Activated T-helper 1 cell treated with anti-CD3 and anti-CD28 coated beads, Interleukin-12 subunit alpha, Interleukin-12 subunit beta, Interleukin-2, Interleukin-4 antibody, amounts not matched to agents 30 ng/mL and 10 ng/mL and 1 ng/mL, durations not matched to agents 14 hours and 24 hours and 36 hours (primary cell): ENCODE measurements at regions of chr10 and their contacts with region 1.

Region 1: DNA sequence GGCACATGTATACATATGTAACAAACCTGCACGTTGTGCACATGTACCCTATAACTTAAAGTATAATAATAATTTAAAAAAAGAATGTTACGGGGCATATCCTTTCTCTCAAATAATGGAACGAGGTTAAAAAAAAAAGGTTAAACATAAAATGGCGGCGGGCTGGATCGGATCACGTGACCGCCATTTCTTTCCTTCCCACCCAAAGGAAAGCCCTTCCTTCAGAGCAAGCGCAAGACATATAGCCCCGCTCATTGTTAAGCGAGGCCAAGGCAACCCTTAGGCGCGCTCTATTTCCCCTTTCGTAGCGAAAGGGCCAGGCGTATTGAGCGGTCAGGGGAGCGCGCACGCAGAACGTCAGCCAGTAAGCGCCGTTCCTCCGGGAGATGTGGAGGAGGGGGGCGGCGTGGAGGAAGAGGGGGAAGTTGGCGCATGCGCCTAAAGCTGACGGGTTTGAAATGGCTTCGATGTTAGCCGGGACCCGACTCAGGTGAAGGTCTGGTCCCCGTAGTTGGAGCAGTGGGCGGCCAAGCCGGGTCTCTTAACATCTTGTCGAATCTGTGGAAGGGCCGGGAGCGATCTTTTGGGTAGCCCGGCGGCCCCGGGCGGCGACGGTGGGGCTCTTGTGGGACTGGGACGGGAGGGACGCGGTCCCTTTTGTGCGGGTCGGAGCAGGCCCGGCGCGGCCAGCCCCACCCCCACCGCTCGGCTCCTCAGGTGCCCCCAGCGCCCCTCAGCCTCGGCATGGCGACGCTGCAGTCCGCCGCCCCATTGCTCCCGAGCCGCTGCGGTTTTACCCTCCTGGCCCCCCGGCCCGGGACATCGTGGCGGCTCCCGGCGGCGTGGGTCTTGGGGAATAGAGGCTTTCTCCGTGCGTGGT is at the start of gene CCAR1:
- DNase-seq: peak; percentile 95
- H3K4me3 Mint-ChIP-seq: peak within 1 kb of the TSS; percentile 90
- H3K27ac Mint-ChIP-seq: peak within 1 kb of the TSS; percentile 98
- H3K4me1 Mint-ChIP-seq: peaks cover 14% of the 10 kb centered on the region
- H3K27me3 Mint-ChIP-seq: peaks cover 2% of the 10 kb centered on the region
- total RNA-seq, gene CCAR1: 102 and 106 TPM in 2 replicates

Region 2: GRCh38 chr10:68471586-68472408 is 249.2 kb before region 1 on chr10 and contains the start of gene DNA2:
- intact Hi-C with region 1: loop called (anchors 1 kb)
- DNase-seq: peak; percentile 71
- H3K4me3 Mint-ChIP-seq: peak within 1 kb of the TSS; percentile 96
- H3K27ac Mint-ChIP-seq: peak within 1 kb of the TSS; percentile 95
- H3K4me1 Mint-ChIP-seq: peaks cover 25% of the 10 kb centered on the region
- H3K27me3 Mint-ChIP-seq: no peaks in the 10 kb centered on the region
- total RNA-seq, gene DNA2: 50.2 and 54.3 TPM in 2 replicates

Region 3: DNA sequence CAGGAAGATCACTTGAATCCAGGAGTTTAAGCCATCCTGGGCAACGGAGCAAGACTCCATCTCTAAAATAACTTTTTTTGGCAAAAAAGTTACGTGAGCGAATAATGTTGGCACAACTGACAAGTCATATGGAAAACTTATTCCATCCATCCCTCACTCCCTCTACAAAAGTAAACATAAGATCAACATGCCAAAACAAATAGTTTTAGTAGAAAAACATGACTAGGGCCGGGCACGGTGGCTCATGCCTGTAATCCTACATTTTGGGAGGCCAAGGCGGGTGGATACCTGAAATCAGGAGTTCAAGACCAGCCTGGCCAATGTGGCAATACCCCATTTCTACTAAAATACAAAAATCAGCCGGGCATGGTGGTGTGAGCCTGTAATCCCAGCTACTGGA is 219.3 kb before region 1 on chr10:
- intact Hi-C with region 1: no loop called
- DNase-seq: no peak
- H3K4me3 Mint-ChIP-seq: no peak overlapping the region
- H3K27ac Mint-ChIP-seq: no peak overlapping the region
- H3K4me1 Mint-ChIP-seq: no peaks in the 10 kb centered on the region
- H3K27me3 Mint-ChIP-seq: no peaks in the 10 kb centered on the region

Region 4: DNA sequence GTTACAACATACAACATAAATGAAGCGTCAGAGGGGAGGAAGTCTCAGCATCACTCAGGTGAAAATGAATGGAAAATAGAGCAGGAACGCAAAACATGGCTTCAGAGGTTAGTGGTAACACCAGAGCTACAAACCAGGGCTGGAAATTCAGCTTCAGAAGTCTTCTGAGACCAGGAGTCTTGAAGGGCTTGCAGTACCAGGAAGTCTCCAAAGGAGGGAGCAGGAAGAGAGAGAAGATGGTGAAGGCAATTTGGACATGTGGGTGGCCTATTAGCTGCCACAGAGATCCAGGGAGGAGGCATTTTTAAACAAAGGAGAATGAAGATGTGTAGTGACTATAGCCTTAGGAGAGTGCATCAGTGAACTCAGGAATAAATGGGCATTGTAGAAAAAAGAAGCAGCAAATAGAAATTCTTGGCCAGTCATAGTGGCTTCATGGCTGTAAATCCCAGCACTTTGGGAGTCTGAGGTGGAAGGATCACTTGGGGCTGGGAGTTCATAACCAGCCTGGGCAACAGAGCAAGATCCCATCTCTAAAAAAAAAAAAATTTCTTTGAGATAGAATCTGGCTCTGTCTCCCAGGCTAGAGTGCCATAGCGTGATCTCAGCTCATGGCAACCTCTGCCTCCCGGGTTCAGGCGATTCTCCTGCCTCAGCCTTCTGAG is 170.2 kb before region 1 on chr10:
- intact Hi-C with region 1: loop called (anchors 5 kb)
- DNase-seq: peak; percentile 31
- H3K4me3 Mint-ChIP-seq: no peak overlapping the region
- H3K27ac Mint-ChIP-seq: no peak overlapping the region
- H3K4me1 Mint-ChIP-seq: no peaks in the 10 kb centered on the region
- H3K27me3 Mint-ChIP-seq: peaks cover 5% of the 10 kb centered on the region

Region 5: DNA sequence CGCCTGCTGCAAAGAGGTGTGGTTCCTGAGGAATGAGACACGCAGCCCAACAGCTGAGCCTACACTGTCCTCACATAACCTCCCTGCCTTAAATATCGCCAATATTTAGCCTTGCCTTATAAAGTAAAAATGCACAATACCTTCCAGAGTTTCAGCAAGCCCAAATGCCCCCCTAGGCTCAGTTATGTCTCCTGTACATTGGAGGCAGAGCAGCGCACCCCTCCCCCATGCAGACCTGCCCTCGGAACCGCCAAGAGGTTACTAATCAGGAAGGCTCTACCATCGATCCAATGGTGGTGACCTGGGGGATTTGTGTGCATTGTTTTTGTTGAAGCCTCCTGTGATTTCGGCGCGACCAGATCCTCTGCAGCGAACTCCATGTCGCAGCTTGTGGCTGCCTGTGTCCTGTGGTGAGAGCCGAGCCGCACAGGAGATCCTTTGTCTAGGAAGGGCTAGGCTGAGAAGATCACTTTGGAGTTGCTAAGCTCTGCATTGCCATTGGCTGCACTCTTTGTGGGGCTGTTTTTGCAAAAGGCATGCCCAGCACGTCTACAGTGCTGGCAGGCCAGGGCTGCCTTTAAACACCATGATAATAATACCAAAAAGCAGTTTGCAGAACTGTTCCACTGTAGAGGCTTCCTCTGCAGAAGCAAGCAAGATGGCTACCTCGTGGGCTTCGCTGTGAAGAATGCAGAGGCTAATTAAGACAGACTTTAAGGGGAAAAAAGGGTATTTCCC is 120.8 kb before region 1 on chr10:
- intact Hi-C with region 1: loop called (anchors 2 kb)
- DNase-seq: peak; percentile 35
- H3K4me3 Mint-ChIP-seq: peak overlapping the region; percentile 85
- H3K27ac Mint-ChIP-seq: peak overlapping the region; percentile 80
- H3K4me1 Mint-ChIP-seq: peaks cover 29% of the 10 kb centered on the region
- H3K27me3 Mint-ChIP-seq: no peaks in the 10 kb centered on the region

Region 6: GRCh38 chr10:68955832-68956532 is 234.9 kb after region 1 on chr10 and contains the start of gene DDX21:
- intact Hi-C with region 1: loop called (anchors 1 kb)
- DNase-seq: peak; percentile 87
- H3K4me3 Mint-ChIP-seq: peak within 1 kb of the TSS; percentile 99
- H3K27ac Mint-ChIP-seq: peak within 1 kb of the TSS; percentile 99
- H3K4me1 Mint-ChIP-seq: peaks cover 25% of the 10 kb centered on the region
- H3K27me3 Mint-ChIP-seq: no peaks in the 10 kb centered on the region
- total RNA-seq, gene DDX21: 267 and 278 TPM in 2 replicates

Region 7: DNA sequence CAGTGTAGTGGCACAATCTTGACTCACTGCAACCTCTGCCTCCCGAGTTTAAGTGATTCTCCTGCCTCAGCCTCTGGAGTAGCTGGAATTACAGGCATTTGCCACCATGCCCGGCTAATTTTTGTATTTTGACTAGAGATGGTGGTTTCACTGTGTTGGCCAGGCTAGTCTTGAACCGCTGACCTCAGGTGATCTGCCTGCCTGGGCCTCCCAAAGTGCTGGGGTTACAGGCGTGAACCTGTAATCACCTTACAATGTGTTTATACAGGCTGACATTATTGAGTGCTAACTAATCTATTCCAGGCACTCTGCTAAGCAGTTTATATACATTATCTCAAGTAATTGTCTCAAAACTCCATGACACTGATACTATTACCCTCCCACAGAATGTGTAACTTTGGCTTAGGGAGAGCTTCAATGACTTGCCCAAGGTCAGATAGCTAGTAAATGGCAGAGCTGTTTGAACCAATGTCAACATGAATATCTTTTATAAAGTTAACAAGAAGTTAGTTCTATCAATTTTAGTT is 304.4 kb after region 1 on chr10:
- intact Hi-C with region 1: no loop called
- DNase-seq: no peak
- H3K4me3 Mint-ChIP-seq: no peak overlapping the region
- H3K27ac Mint-ChIP-seq: no peak overlapping the region
- H3K4me1 Mint-ChIP-seq: peaks cover 11% of the 10 kb centered on the region
- H3K27me3 Mint-ChIP-seq: no peaks in the 10 kb centered on the region